CD14-positive monocyte (primary cell): ENCODE measurements at regions of chr22 and their contacts with region 1.

Region 1: DNA sequence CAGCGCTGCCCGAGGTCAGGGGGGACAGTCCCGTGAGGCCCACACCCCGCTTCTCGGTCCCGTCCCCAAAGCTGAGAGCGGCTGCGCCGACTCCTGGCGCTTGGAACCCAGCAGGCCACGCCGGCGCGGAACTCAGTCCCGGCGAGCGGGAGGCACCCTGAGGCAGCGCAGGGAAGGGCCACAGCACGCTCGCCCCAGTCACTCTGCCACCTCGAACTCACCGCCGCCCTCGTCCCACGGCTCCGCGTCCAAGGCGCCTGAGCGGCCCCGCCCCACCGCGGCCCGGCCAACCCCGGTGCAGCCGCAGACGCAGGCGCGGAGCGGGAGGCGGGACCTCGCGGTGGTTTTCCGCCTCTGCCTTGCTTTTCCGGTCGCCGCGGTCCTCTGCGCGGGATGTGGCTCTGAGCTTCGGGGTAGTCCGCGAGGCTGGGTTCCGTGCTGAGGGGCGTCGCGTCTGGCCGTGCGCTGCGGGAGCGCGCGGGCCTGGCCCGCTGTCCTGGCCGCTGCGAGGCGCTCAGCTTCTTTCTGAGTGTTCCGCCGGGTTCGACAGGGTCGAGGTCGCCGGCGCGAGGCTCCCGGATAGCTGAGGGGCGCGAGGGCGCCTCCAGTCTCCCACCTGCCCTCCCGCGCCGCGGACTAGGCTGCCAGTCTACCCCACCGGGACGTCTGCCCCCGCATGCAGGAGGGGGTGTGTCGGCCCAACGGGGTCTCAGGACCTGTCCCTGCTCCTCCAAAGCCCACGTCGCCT is at the start of gene CDPF1:
- DNase-seq: peak; percentile 77 to 84 (median 82)
- H3K4me3 ChIP-seq: peak within 1 kb of the TSS; percentile 58 to 88 (median 67)
- H3K4me3 Mint-ChIP-seq: peak within 1 kb of the TSS; percentile 89 to 93
- H3K27ac ChIP-seq: peak within 1 kb of the TSS; percentile 61 to 81
- H3K27ac Mint-ChIP-seq: peak within 1 kb of the TSS; percentile 33 to 84 (median 72)
- H3K4me1 ChIP-seq: peaks cover 14 to 19% of the 10 kb centered on the region in 2 donors
- H3K4me1 Mint-ChIP-seq: peaks cover 26% of the 10 kb centered on the region
- H3K27me3 ChIP-seq: no peaks in the 10 kb centered on the region
- H3K27me3 Mint-ChIP-seq: peaks cover 0 to 4% (median 0%) of the 10 kb centered on the region in 3 donors
- CTCF ChIP-seq: no peak
- polyA plus RNA-seq, gene CDPF1: 8.3 to 8.4 (median 8.3) TPM

Region 2: DNA sequence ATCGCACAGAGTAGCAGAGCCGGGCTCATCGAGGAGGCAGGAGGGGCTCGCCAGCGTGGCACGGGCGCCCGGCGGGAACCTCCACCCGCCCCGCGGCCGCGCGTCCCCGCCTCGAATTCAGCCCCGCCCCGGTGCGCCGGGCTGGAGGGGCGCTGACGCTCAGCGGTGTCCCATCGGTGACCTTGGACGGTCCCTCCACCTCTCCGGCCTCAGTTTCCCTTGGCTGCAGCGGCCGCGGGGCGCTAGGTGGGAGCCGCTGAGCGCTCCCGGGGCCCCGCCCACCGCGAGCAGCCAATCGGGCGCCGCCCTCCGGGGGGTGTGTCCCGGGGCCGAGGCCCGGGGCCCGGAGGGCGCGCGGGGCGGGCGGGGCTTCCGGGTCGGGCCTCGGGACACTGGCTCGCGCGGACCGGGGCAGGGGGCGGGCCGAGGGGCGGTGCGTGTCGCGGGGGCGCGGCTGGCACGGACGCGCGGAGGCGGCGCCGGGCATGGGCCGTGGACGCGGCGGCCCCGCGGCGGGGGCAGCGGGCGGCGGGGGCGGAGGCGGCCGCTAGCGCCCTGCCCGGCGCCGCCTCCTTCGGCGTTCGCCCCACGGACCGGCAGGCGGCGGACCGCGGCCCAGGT is 100.1 kb before region 1 on chr22 and contains the start of gene PPARA:
- intact Hi-C with region 1: loop called in 1 of 2 experiments (anchors 5 kb)
- DNase-seq: peak; percentile 66 to 69 (median 68)
- H3K4me3 ChIP-seq: peak within 1 kb of the TSS; percentile 68 to 89 (median 80)
- H3K4me3 Mint-ChIP-seq: peak within 1 kb of the TSS; percentile 87 to 92
- H3K27ac ChIP-seq: peak within 1 kb of the TSS in 1 of 2 donors; percentile 72
- H3K27ac Mint-ChIP-seq: peak within 1 kb of the TSS in 5 of 7 donors; percentile 37 to 73 (median 55)
- H3K4me1 ChIP-seq: peaks cover 16 to 28% of the 10 kb centered on the region in 2 donors
- H3K4me1 Mint-ChIP-seq: peaks cover 20% of the 10 kb centered on the region
- H3K27me3 ChIP-seq: peaks cover 8 to 33% of the 10 kb centered on the region in 2 donors
- H3K27me3 Mint-ChIP-seq: peaks cover 26 to 45% (median 29%) of the 10 kb centered on the region in 3 donors
- CTCF ChIP-seq: no peak
- polyA plus RNA-seq, gene PPARA: 3.7 to 6.3 (median 4.9) TPM